AG04450 (cell line): ENCODE measurements at regions of chr3 and their contacts with region 1.

Region 1: GRCh38 chr3:184737641-184738535 is 26.0 kb upstream of the MAGEF1 start:
- DNase-seq: no peak
- H3K4me3 ChIP-seq: no peak overlapping the region
- H3K27ac ChIP-seq: no peak overlapping the region
- H3K27me3 ChIP-seq: peaks cover 6% of the 10 kb centered on the region
- CTCF ChIP-seq: no peak

Region 2: GRCh38 chr3:184229394-184230080 is 508.4 kb before region 1 on chr3 and contains the start of gene VWA5B2:
- CTCF ChIA-PET with region 1: no interaction called
- POLR2A ChIA-PET with region 1: no interaction called
- DNase-seq: no peak
- H3K4me3 ChIP-seq: peak within 1 kb of the TSS; percentile 44
- H3K27ac ChIP-seq: no peak within 1 kb of the TSS
- H3K27me3 ChIP-seq: peaks cover 52% of the 10 kb centered on the region
- CTCF ChIP-seq: 0 out of 2 replicates have a peak, but pooled peaks have one; percentile 16
- polyA plus RNA-seq, gene VWA5B2: not detected in 2 replicates

Region 3: GRCh38 chr3:184727357-184728009 is 10.4 kb before region 1 on chr3:
- CTCF ChIA-PET with region 1: interaction called, 11 read pairs
- POLR2A ChIA-PET with region 1: interaction called, 3 read pairs
- DNase-seq: no peak
- H3K4me3 ChIP-seq: no peak overlapping the region
- H3K27ac ChIP-seq: no peak overlapping the region
- H3K27me3 ChIP-seq: peaks cover 7% of the 10 kb centered on the region
- CTCF ChIP-seq: peak; percentile 78

Region 4: DNA sequence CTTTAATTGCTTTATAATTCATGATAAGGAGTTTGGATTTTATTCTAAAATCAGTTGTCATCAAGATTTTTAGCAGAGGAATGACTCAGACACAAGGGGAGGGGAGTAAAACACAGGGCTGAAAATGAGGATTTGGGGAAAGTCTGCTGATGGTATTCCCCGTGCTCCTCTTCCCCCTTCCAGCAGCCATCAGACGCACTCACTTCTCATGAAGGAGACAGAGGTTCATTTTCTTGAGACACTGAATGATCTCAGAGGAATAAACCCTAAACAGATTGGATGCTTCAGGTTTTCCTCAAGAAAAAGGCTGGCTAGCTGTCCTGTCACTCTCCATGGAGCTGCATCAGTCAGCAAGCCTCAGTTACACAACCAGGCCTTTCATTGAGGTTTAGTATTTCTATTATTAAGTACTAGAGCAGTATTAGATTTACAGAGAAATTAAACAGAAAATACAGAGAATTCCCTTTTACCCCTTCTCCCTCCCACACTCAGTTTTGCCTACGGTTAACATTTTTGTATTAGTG is 248.5 kb after region 1 on chr3:
- CTCF ChIA-PET with region 1: no interaction called
- POLR2A ChIA-PET with region 1: no interaction called
- DNase-seq: no peak
- H3K4me3 ChIP-seq: no peak overlapping the region
- H3K27ac ChIP-seq: no peak overlapping the region
- H3K27me3 ChIP-seq: no peaks in the 10 kb centered on the region
- CTCF ChIP-seq: no peak